OCI-LY7 (cell line): ENCODE measurements at regions of chr16 and their contacts with region 1.

Region 1: GRCh38 chr16:85114909-85115567 is 2.8 kb upstream of the CIBAR2 start:
- DNase-seq: peak; percentile 84
- H3K4me3 ChIP-seq: peak overlapping the region; percentile 26
- H3K27ac ChIP-seq: no peak overlapping the region
- H3K4me1 ChIP-seq: peaks cover 6% of the 10 kb centered on the region
- CTCF ChIP-seq: peak; percentile 98

Region 2: GRCh38 chr16:85227084-85227945 is 112.3 kb after region 1 on chr16:
- CTCF ChIA-PET with region 1: no interaction called
- POLR2A ChIA-PET with region 1: no interaction called
- intact Hi-C with region 1: loop called (anchors 5 kb)
- DNase-seq: peak; percentile 76
- H3K4me3 ChIP-seq: no peak overlapping the region
- H3K27ac ChIP-seq: peak overlapping the region; percentile 47
- H3K4me1 ChIP-seq: peaks cover 24% of the 10 kb centered on the region
- CTCF ChIP-seq: no peak

Region 3: DNA sequence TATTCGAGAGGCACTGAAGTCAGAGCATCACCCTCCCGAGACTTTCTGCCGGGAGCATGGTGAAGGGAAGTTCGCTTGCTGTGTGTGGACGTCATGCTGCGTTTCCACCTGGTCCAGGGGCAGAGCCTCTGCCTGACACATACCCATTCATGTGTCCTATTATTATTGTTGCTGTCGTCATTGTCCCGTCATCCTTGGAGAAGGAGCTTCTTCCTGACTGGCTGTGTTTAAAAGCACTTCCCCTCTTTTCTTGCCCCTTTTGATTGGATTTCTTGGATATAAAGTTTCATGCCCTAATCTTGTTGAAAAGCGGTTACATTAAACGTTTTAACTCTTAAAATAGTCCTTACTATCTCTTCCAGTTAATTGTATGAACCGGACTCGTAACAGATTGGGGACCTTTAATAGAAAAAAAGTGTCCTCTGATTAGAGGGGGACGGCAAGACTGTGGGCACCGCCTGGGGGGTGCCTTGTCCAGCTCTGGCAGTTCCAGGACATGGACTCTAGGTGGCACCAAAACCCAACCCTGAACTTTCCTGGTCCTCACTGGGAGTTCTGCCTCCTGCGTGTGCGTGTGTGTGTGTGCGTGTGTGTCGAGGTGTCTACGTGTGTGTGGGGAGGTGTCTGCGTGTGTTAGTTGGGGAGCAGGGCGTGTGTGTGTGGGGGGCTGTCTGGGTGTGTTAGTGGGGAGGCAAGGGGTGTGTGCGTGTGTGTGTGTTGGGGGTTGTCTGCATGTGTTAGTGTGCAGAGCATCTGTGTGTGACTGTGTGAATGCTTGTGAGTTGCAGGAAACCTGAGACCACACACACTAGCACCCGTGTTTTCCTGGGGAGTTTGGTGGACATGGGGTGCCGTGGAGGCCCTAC is 130.5 kb after region 1 on chr16:
- CTCF ChIA-PET with region 1: no interaction called
- POLR2A ChIA-PET with region 1: no interaction called
- intact Hi-C with region 1: loop called (anchors 5 kb)
- DNase-seq: peak; percentile 78
- H3K4me3 ChIP-seq: no peak overlapping the region
- H3K27ac ChIP-seq: no peak overlapping the region
- H3K4me1 ChIP-seq: no peaks in the 10 kb centered on the region
- CTCF ChIP-seq: peak; percentile 98